Caco-2 (cell line): ENCODE measurements at regions of chr2 and their contacts with region 1.

Region 1: GRCh38 chr2:141911485-141912066 is 219.2 kb downstream of the LRP1B start:
- DNase-seq: peak in 1 of 2 experiments; percentile 46
- H3K4me3 ChIP-seq: no peak overlapping the region
- H3K4me3 Mint-ChIP-seq: no peak overlapping the region
- H3K27ac Mint-ChIP-seq: no peak overlapping the region
- H3K4me1 ChIP-seq: no peaks in the 10 kb centered on the region
- H3K4me1 Mint-ChIP-seq: no peaks in the 10 kb centered on the region
- H3K27me3 ChIP-seq: no peaks in the 10 kb centered on the region
- H3K27me3 Mint-ChIP-seq: no peaks in the 10 kb centered on the region
- CTCF ChIP-seq: peak; percentile 30 to 37

Region 2: DNA sequence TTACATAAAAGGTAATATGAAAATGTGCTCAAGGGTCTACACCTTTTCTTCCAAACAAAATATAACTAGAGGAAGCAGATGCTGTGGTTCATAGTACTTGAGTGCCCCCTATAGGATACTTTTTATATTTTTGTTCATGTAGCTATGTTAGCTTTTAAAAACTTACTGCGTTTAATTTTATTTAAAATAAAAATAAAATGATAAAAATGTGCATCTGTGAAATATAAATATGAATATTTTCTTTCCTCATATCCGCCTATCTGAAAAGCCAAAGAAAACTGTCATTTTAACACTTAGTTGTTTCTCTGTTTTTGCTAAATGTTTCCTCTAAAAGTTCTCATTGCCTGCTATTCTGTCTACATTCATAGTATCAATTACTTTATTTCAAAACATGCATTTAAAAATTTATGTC is 228.9 kb after region 1 on chr2:
- CTCF ChIA-PET with region 1: no interaction called
- POLR2A ChIA-PET with region 1: no interaction called
- intact Hi-C with region 1: loop called (anchors 1 kb)
- DNase-seq: no peak
- H3K4me3 ChIP-seq: no peak overlapping the region
- H3K4me3 Mint-ChIP-seq: no peak overlapping the region
- H3K27ac Mint-ChIP-seq: no peak overlapping the region
- H3K4me1 ChIP-seq: no peaks in the 10 kb centered on the region
- H3K4me1 Mint-ChIP-seq: no peaks in the 10 kb centered on the region
- H3K27me3 ChIP-seq: no peaks in the 10 kb centered on the region
- H3K27me3 Mint-ChIP-seq: no peaks in the 10 kb centered on the region
- CTCF ChIP-seq: peak; percentile 35 to 43